Activated T-helper 1 cell treated with anti-CD3 and anti-CD28 coated beads, Interleukin-12 subunit alpha, Interleukin-12 subunit beta, Interleukin-2, Interleukin-4 antibody, amounts not matched to agents 30 ng/mL and 10 ng/mL and 1 ng/mL, durations not matched to agents 14 hours and 24 hours and 36 hours (primary cell): ENCODE measurements at regions of chr4 and their contacts with region 1.

Region 1: GRCh38 chr4:152185786-152186550 is 349.9 kb downstream of the FBXW7 start:
- DNase-seq: no peak
- H3K4me3 Mint-ChIP-seq: no peak overlapping the region
- H3K27ac Mint-ChIP-seq: no peak overlapping the region
- H3K4me1 Mint-ChIP-seq: peaks cover 34% of the 10 kb centered on the region
- H3K27me3 Mint-ChIP-seq: no peaks in the 10 kb centered on the region

Region 2: DNA sequence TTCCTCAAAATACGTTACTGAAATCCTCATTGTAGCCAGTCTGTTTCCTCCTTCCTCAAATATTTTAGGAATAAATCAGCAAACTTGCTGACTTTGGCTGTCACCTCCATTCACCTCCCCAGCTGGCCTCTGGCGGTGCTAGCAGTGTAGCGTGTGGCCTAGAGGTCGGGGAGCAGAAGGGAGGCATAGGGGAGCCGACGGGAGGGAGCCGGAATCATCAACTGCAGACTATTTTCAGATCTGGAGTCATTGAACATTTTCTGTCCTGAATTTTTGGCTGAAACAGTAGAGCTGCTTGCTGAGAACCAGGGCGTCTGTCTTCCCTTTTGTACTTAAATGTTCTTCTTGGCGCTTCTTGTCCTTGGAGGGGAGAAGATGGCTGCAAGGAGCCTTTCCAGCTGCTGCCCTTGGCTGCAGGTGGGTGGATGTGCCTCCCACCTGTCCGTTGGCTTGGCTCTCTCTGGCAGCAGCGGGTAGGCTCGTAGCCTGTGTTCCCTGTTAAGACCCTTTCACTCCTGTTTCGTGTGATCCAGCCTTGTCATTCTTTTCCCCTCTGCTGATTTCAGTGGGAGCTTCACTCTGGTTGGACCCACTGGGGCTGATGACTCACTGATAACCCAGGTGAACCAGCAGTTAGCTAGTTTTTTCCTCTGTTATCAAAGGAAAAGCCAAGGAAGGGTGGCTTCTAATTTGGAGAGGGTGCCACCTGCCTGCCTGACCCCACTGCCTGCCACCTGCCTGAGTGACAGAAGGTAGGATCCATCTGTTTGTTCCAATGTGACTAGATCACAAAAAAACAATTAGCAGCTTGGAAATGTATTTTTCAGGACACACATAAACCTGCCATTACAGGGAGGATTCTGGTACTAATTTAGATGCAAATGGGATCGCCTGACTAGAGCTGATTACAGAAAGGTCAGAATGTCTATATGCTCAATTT is 561.1 kb before region 1 on chr4:
- intact Hi-C with region 1: no loop called
- DNase-seq: no peak
- H3K4me3 Mint-ChIP-seq: no peak overlapping the region
- H3K27ac Mint-ChIP-seq: no peak overlapping the region
- H3K4me1 Mint-ChIP-seq: no peaks in the 10 kb centered on the region
- H3K27me3 Mint-ChIP-seq: peaks cover 17% of the 10 kb centered on the region

Region 3: DNA sequence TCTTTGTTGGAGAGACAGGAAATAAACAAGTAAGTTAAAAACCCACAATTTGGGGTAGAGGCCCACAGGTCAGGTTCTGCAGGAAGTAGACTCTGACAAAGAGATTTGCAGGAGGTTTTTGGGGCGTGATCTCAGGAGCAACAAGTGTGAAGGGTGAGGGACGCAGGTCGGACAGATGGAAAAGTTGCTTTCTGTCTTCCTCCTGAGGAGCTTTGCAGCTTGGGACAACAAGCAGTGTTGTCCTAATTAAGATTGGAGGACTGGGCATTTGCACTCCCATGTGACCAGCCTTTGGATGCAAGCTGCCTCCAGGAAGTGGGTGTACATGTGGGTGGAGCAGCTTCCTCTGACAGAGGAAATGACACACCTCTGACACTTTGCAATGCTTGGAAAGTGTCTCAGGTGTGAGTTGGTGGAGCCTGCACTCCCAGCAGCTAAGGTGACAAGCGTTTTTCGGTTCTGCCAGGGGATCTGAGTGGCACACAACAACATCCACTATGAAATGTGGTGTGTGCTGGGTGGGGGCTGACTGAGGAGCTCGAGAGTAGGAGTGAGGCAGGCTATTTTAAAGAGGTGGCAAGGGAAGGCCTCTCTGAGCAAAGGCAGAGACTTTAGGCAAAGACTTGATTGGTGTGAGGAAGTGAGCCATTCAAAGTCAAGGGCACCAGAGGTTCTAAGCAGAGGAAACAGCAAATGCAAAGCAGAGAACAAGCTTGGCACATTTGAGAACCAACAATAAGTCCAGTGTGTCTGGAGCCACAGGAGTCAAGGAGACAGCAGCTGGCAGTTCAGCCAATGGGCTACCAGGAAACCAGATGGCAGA is 85.4 kb before region 1 on chr4:
- intact Hi-C with region 1: loop called (anchors 1 kb)
- DNase-seq: peak; percentile 78
- H3K4me3 Mint-ChIP-seq: peak overlapping the region; percentile 75
- H3K27ac Mint-ChIP-seq: peak overlapping the region; percentile 97
- H3K4me1 Mint-ChIP-seq: peaks cover 79% of the 10 kb centered on the region
- H3K27me3 Mint-ChIP-seq: no peaks in the 10 kb centered on the region

Region 4: GRCh38 chr4:152255437-152256011 is 69.6 kb after region 1 on chr4:
- intact Hi-C with region 1: loop called (anchors 2 kb)
- DNase-seq: peak; percentile 70
- H3K4me3 Mint-ChIP-seq: no peak overlapping the region
- H3K27ac Mint-ChIP-seq: no peak overlapping the region
- H3K4me1 Mint-ChIP-seq: no peaks in the 10 kb centered on the region
- H3K27me3 Mint-ChIP-seq: no peaks in the 10 kb centered on the region